Endothelial cell of umbilical vein (primary cell): ENCODE measurements at regions of chr14 and their contacts with region 1.

Region 1: GRCh38 chr14:46344327-46344937 is 307.1 kb downstream of the RPL10L start:
- DNase-seq: peak; percentile 60
- H3K4me3 ChIP-seq: no peak overlapping the region
- H3K27ac ChIP-seq: no peak overlapping the region
- H3K4me1 ChIP-seq: no peaks in the 10 kb centered on the region
- H3K27me3 ChIP-seq: no peaks in the 10 kb centered on the region
- CTCF ChIP-seq: peak; percentile 57 to 63
- POLR2A ChIP-seq: no peak

Region 2: DNA sequence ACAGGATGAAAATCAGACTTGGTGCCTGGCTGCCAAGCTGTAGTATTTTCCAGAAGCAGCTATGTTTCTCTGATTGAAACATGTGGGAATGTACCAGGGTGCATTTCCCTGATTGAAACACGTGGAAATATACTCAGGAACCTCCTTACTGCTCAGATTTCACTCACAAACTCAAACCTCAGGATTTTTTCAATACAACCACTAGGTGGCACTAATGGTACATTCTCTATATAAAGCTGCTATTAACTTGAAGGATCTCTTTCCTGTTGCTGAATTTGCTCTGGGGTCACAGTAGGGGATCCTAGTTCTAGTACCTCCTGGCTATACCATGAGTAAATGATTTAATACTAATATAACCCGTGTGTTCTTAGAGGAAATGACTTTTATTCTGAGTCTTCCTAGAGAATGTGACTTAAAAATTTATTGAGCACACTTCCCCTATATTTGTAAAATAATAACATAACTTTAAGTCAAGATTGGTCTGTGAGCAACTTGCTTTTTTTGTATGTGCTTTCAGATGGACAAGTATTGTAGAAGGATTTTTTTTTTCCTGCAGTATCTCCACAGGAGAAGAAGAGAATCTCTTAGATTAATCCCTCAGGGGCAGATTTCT is 917.7 kb before region 1 on chr14:
- CTCF ChIA-PET with region 1: no interaction called
- POLR2A ChIA-PET with region 1: no interaction called
- dilution Hi-C with region 1: no loop called
- intact Hi-C with region 1: loop called (anchors 1 kb)
- DNase-seq: peak; percentile 41
- H3K4me3 ChIP-seq: no peak overlapping the region
- H3K27ac ChIP-seq: no peak overlapping the region
- H3K4me1 ChIP-seq: no peaks in the 10 kb centered on the region
- H3K27me3 ChIP-seq: no peaks in the 10 kb centered on the region
- CTCF ChIP-seq: peak; percentile 25 to 42
- POLR2A ChIP-seq: no peak

Region 3: GRCh38 chr14:45651890-45652289 is 692.5 kb before region 1 on chr14:
- CTCF ChIA-PET with region 1: no interaction called
- POLR2A ChIA-PET with region 1: no interaction called
- dilution Hi-C with region 1: no loop called
- intact Hi-C with region 1: no loop called
- DNase-seq: peak; percentile 10
- H3K4me3 ChIP-seq: no peak overlapping the region
- H3K27ac ChIP-seq: no peak overlapping the region
- H3K4me1 ChIP-seq: no peaks in the 10 kb centered on the region
- H3K27me3 ChIP-seq: no peaks in the 10 kb centered on the region
- CTCF ChIP-seq: no peak
- POLR2A ChIP-seq: no peak

Region 4: GRCh38 chr14:46048127-46048526 is 296.3 kb before region 1 on chr14:
- CTCF ChIA-PET with region 1: no interaction called
- POLR2A ChIA-PET with region 1: no interaction called
- dilution Hi-C with region 1: no loop called
- intact Hi-C with region 1: loop called (anchors 1 kb)
- DNase-seq: peak; percentile 53
- H3K4me3 ChIP-seq: no peak overlapping the region
- H3K27ac ChIP-seq: no peak overlapping the region
- H3K4me1 ChIP-seq: no peaks in the 10 kb centered on the region
- H3K27me3 ChIP-seq: no peaks in the 10 kb centered on the region
- CTCF ChIP-seq: peak in 1 of 2 donors; percentile 36
- POLR2A ChIP-seq: no peak

Region 5: GRCh38 chr14:46250113-46250703 is 94.2 kb before region 1 on chr14:
- CTCF ChIA-PET with region 1: no interaction called
- POLR2A ChIA-PET with region 1: no interaction called
- dilution Hi-C with region 1: no loop called
- intact Hi-C with region 1: loop called (anchors 1 kb)
- DNase-seq: peak; percentile 52
- H3K4me3 ChIP-seq: no peak overlapping the region
- H3K27ac ChIP-seq: no peak overlapping the region
- H3K4me1 ChIP-seq: no peaks in the 10 kb centered on the region
- H3K27me3 ChIP-seq: no peaks in the 10 kb centered on the region
- CTCF ChIP-seq: peak; percentile 27 to 48
- POLR2A ChIP-seq: no peak